CD14-positive monocyte (primary cell): ENCODE measurements at regions of chr3 and their contacts with region 1.

Region 1: GRCh38 chr3:197795200-197795599 is 4.1 kb downstream of the LRCH3 start:
- DNase-seq: peak; percentile 19 to 75 (median 36)
- H3K4me3 ChIP-seq: no peak overlapping the region
- H3K4me3 Mint-ChIP-seq: no peak overlapping the region
- H3K27ac ChIP-seq: no peak overlapping the region
- H3K27ac Mint-ChIP-seq: peak overlapping the region in 3 of 7 donors; percentile 7 to 77 (median 23)
- H3K4me1 ChIP-seq: peaks cover 13 to 27% of the 10 kb centered on the region in 2 donors
- H3K4me1 Mint-ChIP-seq: peaks cover 43% of the 10 kb centered on the region
- H3K27me3 ChIP-seq: no peaks in the 10 kb centered on the region
- H3K27me3 Mint-ChIP-seq: no peaks in the 10 kb centered on the region
- CTCF ChIP-seq: no peak

Region 2: DNA sequence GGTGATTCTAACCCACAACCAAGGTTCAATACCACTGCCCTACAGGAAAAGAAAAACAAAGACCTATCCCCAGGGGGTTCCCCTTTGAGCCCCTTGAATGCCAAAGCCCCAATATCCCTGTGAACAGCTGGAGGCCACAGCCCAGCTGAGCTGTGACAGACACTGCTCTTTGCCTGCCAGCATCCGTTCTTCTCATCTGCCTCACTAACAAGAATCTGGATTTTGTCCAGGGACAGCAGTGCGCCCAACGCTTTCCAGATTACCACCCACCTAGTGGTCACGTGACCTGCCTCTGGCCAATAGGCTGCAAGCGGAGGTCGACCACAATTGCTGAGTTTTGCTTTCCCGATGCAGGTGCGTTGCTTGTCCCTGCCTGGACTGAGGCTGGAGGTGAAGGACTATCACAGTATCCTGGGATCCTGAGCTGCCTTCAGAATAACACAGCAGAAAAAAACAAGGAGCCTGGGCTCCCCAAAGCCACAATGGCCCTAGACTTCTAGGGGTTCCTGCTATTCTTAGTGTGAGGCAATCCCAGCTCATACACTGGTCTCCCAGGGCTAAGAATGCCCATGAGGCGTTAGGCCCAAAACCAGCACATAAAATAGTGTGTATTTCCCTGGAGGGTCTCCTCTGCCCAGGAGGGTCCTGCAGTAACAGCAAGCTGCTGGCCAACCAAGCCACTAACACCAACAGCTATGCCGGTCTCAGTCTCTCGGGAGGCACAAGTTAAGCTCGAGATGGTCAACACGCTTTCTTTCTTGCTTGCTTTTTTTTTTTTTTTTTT is 253.3 kb before region 1 on chr3:
- intact Hi-C with region 1: no loop called
- DNase-seq: no peak
- H3K4me3 ChIP-seq: no peak overlapping the region
- H3K4me3 Mint-ChIP-seq: no peak overlapping the region
- H3K27ac ChIP-seq: peak overlapping the region in 1 of 2 donors; percentile 69
- H3K27ac Mint-ChIP-seq: peak overlapping the region in 4 of 7 donors; percentile 22 to 93 (median 62)
- H3K4me1 ChIP-seq: peaks cover 48 to 53% of the 10 kb centered on the region in 2 donors
- H3K4me1 Mint-ChIP-seq: peaks cover 53% of the 10 kb centered on the region
- H3K27me3 ChIP-seq: no peaks in the 10 kb centered on the region
- H3K27me3 Mint-ChIP-seq: no peaks in the 10 kb centered on the region
- CTCF ChIP-seq: no peak

Region 3: GRCh38 chr3:197749601-197750395 is 45.4 kb before region 1 on chr3 and contains the start of gene FYTTD1:
- intact Hi-C with region 1: loop called in 1 of 2 experiments (anchors 2 kb)
- DNase-seq: peak; percentile 80 to 88 (median 85)
- H3K4me3 ChIP-seq: peak within 1 kb of the TSS; percentile 63 to 80 (median 77)
- H3K4me3 Mint-ChIP-seq: peak within 1 kb of the TSS; percentile 94 to 97
- H3K27ac ChIP-seq: peak within 1 kb of the TSS; percentile 79
- H3K27ac Mint-ChIP-seq: peak within 1 kb of the TSS; percentile 90 to 96 (median 94)
- H3K4me1 ChIP-seq: peaks cover 48 to 53% of the 10 kb centered on the region in 2 donors
- H3K4me1 Mint-ChIP-seq: peaks cover 51% of the 10 kb centered on the region
- H3K27me3 ChIP-seq: no peaks in the 10 kb centered on the region
- H3K27me3 Mint-ChIP-seq: peaks cover 5 to 12% (median 10%) of the 10 kb centered on the region in 3 donors
- CTCF ChIP-seq: peak; percentile 45
- polyA plus RNA-seq, gene FYTTD1: 11.5 to 73.2 (median 59.4) TPM